Caco-2 (cell line): ENCODE measurements at regions of chr11 and their contacts with region 1.

Region 1: DNA sequence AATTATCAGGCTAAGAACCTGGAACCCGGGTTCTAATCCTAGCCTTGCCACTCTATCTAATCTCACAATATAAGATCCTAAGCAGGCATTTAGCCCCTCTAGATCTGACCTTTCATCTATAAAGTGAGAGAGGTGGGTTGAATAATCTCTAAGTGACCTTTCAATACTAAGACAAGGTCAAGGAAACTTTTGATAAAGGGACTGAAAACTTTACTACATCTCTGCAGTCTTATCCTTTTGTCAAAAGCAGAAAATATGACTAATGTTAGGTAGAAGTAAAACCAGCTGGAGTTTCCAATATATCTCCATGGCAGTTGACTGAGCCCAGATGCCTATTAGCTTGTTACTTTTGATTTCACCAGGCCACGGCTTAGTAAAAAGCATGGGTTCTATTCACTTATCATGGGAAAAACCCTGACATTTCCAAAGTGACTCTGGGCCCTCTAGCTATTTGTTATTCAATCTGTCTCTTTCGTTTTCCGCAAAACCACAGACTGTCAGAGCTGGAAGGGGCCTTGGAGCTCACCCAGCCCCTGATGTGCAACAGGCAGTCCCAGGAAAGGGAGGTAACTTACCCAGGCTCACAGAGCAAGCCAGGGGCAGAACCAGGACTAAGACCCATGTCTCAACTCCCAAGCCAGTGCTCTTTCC is 75.8 kb downstream of the RAB30 start:
- DNase-seq: no peak
- H3K4me3 ChIP-seq: no peak overlapping the region
- H3K4me3 Mint-ChIP-seq: no peak overlapping the region
- H3K27ac Mint-ChIP-seq: no peak overlapping the region
- H3K4me1 ChIP-seq: peaks cover 14% of the 10 kb centered on the region
- H3K4me1 Mint-ChIP-seq: no peaks in the 10 kb centered on the region
- H3K27me3 ChIP-seq: no peaks in the 10 kb centered on the region
- H3K27me3 Mint-ChIP-seq: no peaks in the 10 kb centered on the region
- CTCF ChIP-seq: no peak

Region 2: GRCh38 chr11:83007909-83008580 is 12.2 kb after region 1 on chr11:
- CTCF ChIA-PET with region 1: no interaction called
- POLR2A ChIA-PET with region 1: no interaction called
- intact Hi-C with region 1: loop called (anchors 2 kb)
- DNase-seq: peak; percentile 79 to 84
- H3K4me3 ChIP-seq: no peak overlapping the region
- H3K4me3 Mint-ChIP-seq: peak overlapping the region; percentile 54
- H3K27ac Mint-ChIP-seq: peak overlapping the region; percentile 76
- H3K4me1 ChIP-seq: peaks cover 25% of the 10 kb centered on the region
- H3K4me1 Mint-ChIP-seq: peaks cover 30% of the 10 kb centered on the region
- H3K27me3 ChIP-seq: no peaks in the 10 kb centered on the region
- H3K27me3 Mint-ChIP-seq: no peaks in the 10 kb centered on the region
- CTCF ChIP-seq: no peak

Region 3: DNA sequence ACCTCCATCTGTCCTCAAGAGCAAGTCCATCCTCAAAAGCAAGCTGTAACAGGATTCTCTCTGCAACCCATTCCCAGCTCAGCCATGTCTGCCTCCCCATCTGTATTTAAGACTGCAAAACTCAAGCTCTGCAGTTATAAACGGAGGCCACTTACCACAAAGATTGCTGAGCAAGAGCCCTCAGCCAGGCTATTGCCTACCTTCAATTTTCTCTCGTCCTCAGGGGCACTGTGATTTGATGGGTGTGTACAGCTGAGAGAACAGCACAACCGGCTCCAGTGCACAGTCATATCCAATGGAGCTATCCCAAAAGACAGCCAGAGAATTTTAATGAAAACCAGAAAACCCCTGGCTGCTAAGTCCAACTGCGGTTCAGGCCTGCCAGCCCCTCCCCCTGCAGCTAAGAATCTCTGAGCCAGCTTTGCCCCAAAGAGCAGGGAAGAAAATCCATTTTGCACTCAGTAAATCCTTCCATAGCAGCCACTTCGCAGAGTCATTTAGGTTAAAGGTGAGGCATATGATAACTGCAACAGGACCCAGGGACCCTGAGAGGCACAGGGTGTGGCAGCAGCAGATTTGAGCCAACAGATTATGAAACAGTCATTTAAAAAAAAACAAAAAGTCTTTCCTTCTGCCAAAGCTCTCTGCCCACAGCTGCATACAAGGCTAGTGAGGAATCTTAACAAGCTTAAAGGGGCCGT is 38.2 kb after region 1 on chr11:
- CTCF ChIA-PET with region 1: no interaction called
- POLR2A ChIA-PET with region 1: no interaction called
- intact Hi-C with region 1: no loop called
- DNase-seq: no peak
- H3K4me3 ChIP-seq: no peak overlapping the region
- H3K4me3 Mint-ChIP-seq: no peak overlapping the region
- H3K27ac Mint-ChIP-seq: no peak overlapping the region
- H3K4me1 ChIP-seq: peaks cover 22% of the 10 kb centered on the region
- H3K4me1 Mint-ChIP-seq: peaks cover 31% of the 10 kb centered on the region
- H3K27me3 ChIP-seq: no peaks in the 10 kb centered on the region
- H3K27me3 Mint-ChIP-seq: no peaks in the 10 kb centered on the region
- CTCF ChIP-seq: no peak